H1 (cell line): ENCODE measurements at regions of chr1 and their contacts with region 1.

Region 1: GRCh38 chr1:224700915-224701531 is 84.9 kb downstream of the CNIH3 start:
- DNase-seq: peak in 1 of 2 experiments; percentile 66
- H3K4me3 ChIP-seq: no peak overlapping the region
- H3K27ac ChIP-seq: no peak overlapping the region
- H3K4me1 ChIP-seq: peaks cover 0 to 8% (median 7%) of the 10 kb centered on the region in 4 experiments; a peak in 6 of 7 replicates
- H3K27me3 ChIP-seq: no peaks in the 10 kb centered on the region
- CTCF ChIP-seq: peak; percentile 64 to 83 (median 74)
- EP300 ChIP-seq: no peak
- POLR2A ChIP-seq: no peak
- RAD21 ChIP-seq: peak; percentile 78 to 88

Region 2: DNA sequence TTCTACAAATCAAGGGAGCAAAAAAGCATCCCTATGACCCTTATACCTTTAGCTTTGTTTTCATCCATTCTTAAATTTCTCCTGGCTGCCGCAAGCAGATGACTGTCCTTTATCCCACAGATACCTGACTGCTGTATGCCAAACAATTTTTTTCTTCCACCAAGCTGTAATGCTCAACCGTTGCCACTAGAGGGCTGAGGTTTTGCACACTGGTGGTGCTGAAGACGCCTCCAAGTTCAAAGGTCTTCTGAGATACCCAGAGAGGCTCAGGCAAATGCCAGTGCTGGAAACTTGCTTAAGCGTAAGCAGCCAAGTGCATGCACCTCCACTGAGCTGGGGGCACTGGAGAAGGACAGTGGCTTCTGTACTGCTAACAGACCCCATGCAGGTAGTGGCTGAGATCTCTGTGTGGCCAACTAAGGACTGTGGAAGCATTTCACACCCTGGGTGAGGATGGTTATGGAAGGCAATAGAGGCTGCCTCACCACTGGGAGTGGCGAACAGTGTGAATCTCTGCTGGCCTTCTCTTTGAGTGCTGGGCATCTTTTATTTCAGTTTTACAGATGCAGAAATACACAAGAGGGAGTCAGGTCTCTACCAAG is 56.4 kb before region 1 on chr1:
- CTCF ChIA-PET with region 1: interaction called, 12 read pairs
- POLR2A ChIA-PET with region 1: interaction called, 3 read pairs
- DNase-seq: peak; percentile 41 to 79
- H3K4me3 ChIP-seq: no peak overlapping the region
- H3K27ac ChIP-seq: no peak overlapping the region
- H3K4me1 ChIP-seq: no peaks in the 10 kb centered on the region
- H3K27me3 ChIP-seq: no peaks in the 10 kb centered on the region
- CTCF ChIP-seq: peak; percentile 61 to 88 (median 87)
- EP300 ChIP-seq: no peak
- POLR2A ChIP-seq: no peak
- RAD21 ChIP-seq: peak; percentile 82 to 86

Region 3: GRCh38 chr1:224684979-224685425 is 16.0 kb before region 1 on chr1:
- CTCF ChIA-PET with region 1: interaction called, 10 read pairs
- POLR2A ChIA-PET with region 1: no interaction called
- DNase-seq: no peak
- H3K4me3 ChIP-seq: no peak overlapping the region
- H3K27ac ChIP-seq: no peak overlapping the region
- H3K4me1 ChIP-seq: no peaks in the 10 kb centered on the region; a peak in 1 of 7 replicates
- H3K27me3 ChIP-seq: no peaks in the 10 kb centered on the region; a peak in 1 of 7 replicates
- CTCF ChIP-seq: no peak
- EP300 ChIP-seq: no peak
- POLR2A ChIP-seq: no peak
- RAD21 ChIP-seq: no peak

Region 4: DNA sequence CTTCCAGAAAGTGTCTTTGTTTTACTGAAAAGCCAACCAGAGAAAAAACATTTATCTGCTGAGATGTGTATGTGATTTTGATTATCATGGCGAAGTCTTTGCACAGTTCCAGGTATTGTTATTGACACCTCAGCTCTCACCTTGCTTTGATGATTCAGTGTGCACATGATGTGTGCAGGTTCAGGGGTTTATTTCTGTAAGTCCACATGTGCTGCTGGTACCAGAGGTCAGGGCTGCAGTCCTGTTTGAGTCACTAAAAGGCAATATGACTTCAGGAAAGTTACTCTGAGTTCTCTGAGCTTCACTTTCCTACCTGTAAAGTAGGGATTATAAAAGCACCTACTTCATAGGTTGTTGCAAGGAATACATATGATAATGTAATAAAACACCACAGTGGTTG is 12.2 kb after region 1 on chr1:
- CTCF ChIA-PET with region 1: interaction called, 30 read pairs
- POLR2A ChIA-PET with region 1: no interaction called
- DNase-seq: no peak
- H3K4me3 ChIP-seq: no peak overlapping the region
- H3K27ac ChIP-seq: no peak overlapping the region
- H3K4me1 ChIP-seq: no peaks in the 10 kb centered on the region
- H3K27me3 ChIP-seq: no peaks in the 10 kb centered on the region
- CTCF ChIP-seq: no peak
- EP300 ChIP-seq: no peak
- POLR2A ChIP-seq: no peak
- RAD21 ChIP-seq: no peak

Region 5: DNA sequence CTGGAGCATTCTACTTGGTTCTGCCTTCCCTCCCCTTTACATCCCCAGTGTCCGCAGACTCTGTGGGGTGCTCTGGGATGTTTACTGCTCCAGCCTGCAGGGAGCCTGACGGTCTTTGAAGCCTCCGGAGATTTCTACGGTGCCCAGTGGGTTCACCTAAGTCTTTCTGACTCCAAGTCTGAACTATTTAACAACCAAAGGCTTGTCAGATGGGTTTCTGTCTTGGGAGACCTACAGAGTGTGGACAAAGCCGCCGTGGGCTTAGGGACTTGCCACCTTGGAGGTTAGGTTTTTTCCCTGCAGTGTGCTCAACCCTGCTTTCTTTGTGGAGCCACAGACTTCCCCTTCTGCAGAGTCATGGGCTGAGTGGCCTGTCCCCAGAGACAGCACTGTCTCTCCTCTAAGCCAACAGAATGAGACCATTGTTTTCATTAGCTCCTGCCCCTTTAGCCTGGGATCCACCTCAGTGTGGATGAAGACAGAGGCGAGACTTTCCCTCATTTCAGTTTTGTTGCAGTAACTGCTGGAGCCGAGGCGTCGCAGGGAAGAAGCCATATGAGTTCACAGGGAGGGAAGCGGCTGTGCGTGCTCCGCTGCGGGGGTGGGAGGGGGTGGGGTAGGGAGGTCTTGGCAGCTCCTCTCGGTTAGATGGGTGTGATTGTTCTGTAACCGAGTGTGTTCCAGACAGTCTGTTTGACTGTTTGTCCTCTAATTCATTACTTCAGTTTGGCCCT is 35.8 kb after region 1 on chr1:
- CTCF ChIA-PET with region 1: interaction called, 44 read pairs
- POLR2A ChIA-PET with region 1: no interaction called
- DNase-seq: no peak
- H3K4me3 ChIP-seq: no peak overlapping the region
- H3K27ac ChIP-seq: no peak overlapping the region
- H3K4me1 ChIP-seq: peaks cover 12 to 26% (median 13%) of the 10 kb centered on the region in 4 experiments
- H3K27me3 ChIP-seq: peaks cover 0 to 2% (median 0%) of the 10 kb centered on the region in 4 experiments; a peak in 1 of 7 replicates
- CTCF ChIP-seq: no peak
- EP300 ChIP-seq: no peak
- POLR2A ChIP-seq: no peak
- RAD21 ChIP-seq: no peak

Region 6: DNA sequence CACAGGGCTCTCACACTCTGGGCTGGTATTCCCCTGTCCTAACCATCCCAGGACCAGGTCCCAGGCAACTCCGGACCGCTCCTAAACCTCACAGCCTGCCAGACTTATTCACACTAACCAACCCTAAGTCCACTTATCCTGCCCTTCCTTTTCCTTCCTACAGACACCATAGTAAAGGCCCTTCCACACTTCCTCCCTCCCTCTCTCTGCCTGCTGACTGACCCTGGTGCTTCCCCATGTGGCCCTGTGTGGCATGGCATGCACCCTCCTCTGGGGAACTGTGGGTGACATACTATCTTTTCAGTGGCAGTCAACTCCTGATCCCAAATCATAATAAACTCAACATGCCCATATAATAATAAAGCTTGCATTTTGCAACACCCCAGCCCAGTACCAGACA is 73.4 kb after region 1 on chr1:
- CTCF ChIA-PET with region 1: interaction called, 12 read pairs
- POLR2A ChIA-PET with region 1: no interaction called
- DNase-seq: no peak
- H3K4me3 ChIP-seq: no peak overlapping the region
- H3K27ac ChIP-seq: no peak overlapping the region
- H3K4me1 ChIP-seq: peaks cover 0 to 6% (median 3%) of the 10 kb centered on the region in 4 experiments; a peak in 3 of 7 replicates
- H3K27me3 ChIP-seq: no peaks in the 10 kb centered on the region; a peak in 1 of 7 replicates
- CTCF ChIP-seq: peak; percentile 63 to 78 (median 73)
- EP300 ChIP-seq: no peak
- POLR2A ChIP-seq: no peak
- RAD21 ChIP-seq: peak; percentile 54 to 71

Region 7: GRCh38 chr1:224922404-224923164 is 221.6 kb after region 1 on chr1:
- CTCF ChIA-PET with region 1: interaction called, 11 read pairs
- POLR2A ChIA-PET with region 1: no interaction called
- DNase-seq: peak in 1 of 2 experiments; percentile 54
- H3K4me3 ChIP-seq: no peak overlapping the region
- H3K27ac ChIP-seq: no peak overlapping the region
- H3K4me1 ChIP-seq: 0 out of 7 replicates have a peak, but pooled peaks cover 0 to 2% (median 0%) of the 10 kb centered on the region in 4 experiments
- H3K27me3 ChIP-seq: no peaks in the 10 kb centered on the region
- CTCF ChIP-seq: peak in 2 of 3 experiments; percentile 61 to 79; a peak in 3 of 4 replicates
- EP300 ChIP-seq: no peak
- POLR2A ChIP-seq: no peak
- RAD21 ChIP-seq: peak; percentile 91 to 93